Body of pancreas (tissue), 4 donors: ENCODE measurements at regions of chr1 and their contacts with region 1.

Region 1: GRCh38 chr1:30707412-30708360 is 15.7 kb downstream of the MATN1 start:
- DNase-seq: peak; percentile 71 to 79 (median 77)
- ATAC-seq: peak; percentile 92
- H3K4me3 ChIP-seq: no peak overlapping the region
- H3K27ac ChIP-seq: no peak overlapping the region
- H3K4me1 ChIP-seq: peaks cover 8% of the 10 kb centered on the region
- H3K27me3 ChIP-seq: no peaks in the 10 kb centered on the region
- CTCF ChIP-seq: peak; percentile 49 to 97 (median 94)
- POLR2A ChIP-seq: no peak

Region 2: GRCh38 chr1:29793101-29793546 is 914.6 kb before region 1 on chr1:
- intact Hi-C with region 1: loop called (anchors 10 kb)
- DNase-seq: peak; percentile 78 to 85 (median 82)
- ATAC-seq: peak; percentile 67
- H3K4me3 ChIP-seq: no peak overlapping the region
- H3K27ac ChIP-seq: no peak overlapping the region
- H3K4me1 ChIP-seq: no peaks in the 10 kb centered on the region
- H3K27me3 ChIP-seq: peaks cover 0 to 4% of the 10 kb centered on the region in 2 donors
- CTCF ChIP-seq: peak; percentile 52 to 77 (median 72)
- POLR2A ChIP-seq: no peak

Region 3: DNA sequence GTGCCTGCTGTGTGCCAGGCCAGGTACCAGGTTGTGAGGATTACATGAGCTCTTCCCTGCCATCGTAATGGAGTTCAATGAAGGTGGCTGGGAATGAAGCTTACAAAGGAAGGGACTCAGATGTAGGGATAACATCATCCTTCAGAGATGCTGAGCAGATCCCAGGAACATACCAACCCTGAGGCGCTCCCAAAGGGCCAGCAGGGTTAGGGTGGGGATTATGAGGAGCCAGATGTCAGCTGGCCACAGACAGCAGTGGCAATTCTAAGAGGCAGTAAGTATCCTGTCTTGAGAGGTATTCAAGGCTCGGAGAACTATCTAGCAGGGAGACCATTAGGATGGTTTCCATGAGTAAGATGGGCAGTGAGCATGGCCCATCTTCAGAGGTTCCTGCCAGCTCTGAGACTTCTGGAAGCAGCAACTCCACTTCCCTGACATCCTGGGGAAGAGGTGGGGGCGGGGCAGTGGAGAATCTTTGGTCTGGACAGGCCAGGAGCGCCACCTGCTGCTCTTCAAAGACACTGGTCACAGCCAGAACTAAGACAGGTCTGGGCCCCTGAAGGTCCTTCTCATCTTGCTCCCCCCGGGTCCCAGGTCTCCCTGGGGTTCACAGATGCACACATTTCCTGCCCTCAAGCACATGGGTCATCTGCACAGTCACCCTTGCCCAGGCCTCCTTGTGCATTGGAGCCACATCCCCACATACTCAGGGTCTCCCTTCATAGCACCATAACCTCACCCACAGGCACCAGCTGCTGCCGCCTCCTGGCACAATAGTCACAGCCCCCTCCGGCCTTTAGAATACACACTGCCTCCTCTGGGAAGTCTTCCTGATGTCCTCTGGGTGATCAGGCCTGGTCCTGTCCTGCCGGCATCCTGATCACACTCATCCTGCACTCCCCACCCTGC is 203.6 kb after region 1 on chr1:
- intact Hi-C with region 1: no loop called
- DNase-seq: peak; percentile 90 to 94 (median 91)
- ATAC-seq: peak; percentile 71
- H3K4me3 ChIP-seq: no peak overlapping the region
- H3K27ac ChIP-seq: no peak overlapping the region
- H3K4me1 ChIP-seq: peaks cover 15% of the 10 kb centered on the region
- H3K27me3 ChIP-seq: no peaks in the 10 kb centered on the region
- CTCF ChIP-seq: peak; percentile 63 to 93 (median 92)
- POLR2A ChIP-seq: no peak